GM12878 (cell line): ENCODE measurements at regions of chr3 and their contacts with region 1.

Region 1: GRCh38 chr3:107598926-107599771 is 76.4 kb downstream of the BBX start:
- DNase-seq: peak; percentile 59
- ATAC-seq: peak; percentile 92
- H3K4me3 ChIP-seq: peak overlapping the region; percentile 71
- H3K27ac ChIP-seq: peak overlapping the region; percentile 82
- H3K4me1 ChIP-seq: peaks cover 13% of the 10 kb centered on the region
- H3K27me3 ChIP-seq: no peaks in the 10 kb centered on the region
- CTCF ChIP-seq: no peak
- EP300 ChIP-seq: no peak
- POLR2A ChIP-seq: peak; percentile 58; the same call in 1 of the 2 replicates
- RAD21 ChIP-seq: no peak

Region 2: GRCh38 chr3:107619549-107619948 is 20.4 kb after region 1 on chr3:
- CTCF ChIA-PET with region 1: interaction called, 47 read pairs
- POLR2A ChIA-PET with region 1: interaction called, 11 read pairs
- RAD21 ChIA-PET with region 1: interaction called, 5 read pairs
- SMC1A ChIA-PET with region 1: interaction called, 15 read pairs
- in situ Hi-C with region 1: no loop called
- intact Hi-C with region 1: no loop called
- DNase-seq: no peak
- ATAC-seq: no peak
- H3K4me3 ChIP-seq: peak overlapping the region; percentile 43; the same call in 1 of the 2 replicates
- H3K27ac ChIP-seq: no peak overlapping the region
- H3K4me1 ChIP-seq: peaks cover 15% of the 10 kb centered on the region
- H3K27me3 ChIP-seq: no peaks in the 10 kb centered on the region
- CTCF ChIP-seq: no peak
- EP300 ChIP-seq: no peak
- POLR2A ChIP-seq: no peak
- RAD21 ChIP-seq: no peak

Region 3: DNA sequence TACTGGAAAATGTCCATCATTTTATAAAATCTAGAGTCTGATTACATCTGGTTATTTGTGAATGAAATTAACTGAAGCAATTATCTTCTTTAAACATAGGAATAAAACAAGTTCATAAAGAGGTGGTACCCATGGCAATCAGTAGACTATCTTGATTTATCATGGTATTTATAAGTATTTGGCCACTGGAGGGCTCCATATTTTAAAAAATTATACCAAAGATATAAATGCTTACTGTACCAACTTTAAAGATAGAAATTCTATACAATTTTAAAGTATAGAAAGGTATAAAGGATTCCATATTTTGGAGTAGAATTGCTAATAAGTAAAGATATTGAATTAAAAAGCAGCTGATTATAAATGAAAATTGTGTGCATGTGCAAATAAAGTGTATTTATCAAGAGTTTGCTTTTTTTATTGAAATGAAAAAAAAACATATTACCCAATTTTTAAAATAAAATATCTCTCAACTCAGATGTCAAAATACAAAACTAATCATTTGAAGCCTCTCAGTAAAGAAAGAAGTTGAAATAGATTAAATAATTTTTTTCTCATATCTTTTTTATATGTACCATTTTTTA is 28.9 kb after region 1 on chr3:
- CTCF ChIA-PET with region 1: interaction called, 47 read pairs
- POLR2A ChIA-PET with region 1: interaction called, 6 read pairs
- RAD21 ChIA-PET with region 1: interaction called, 18 read pairs
- SMC1A ChIA-PET with region 1: interaction called, 33 read pairs
- in situ Hi-C with region 1: no loop called
- intact Hi-C with region 1: no loop called
- DNase-seq: no peak
- ATAC-seq: peak; percentile 46; the same call in 1 of the 3 replicates
- H3K4me3 ChIP-seq: no peak overlapping the region
- H3K27ac ChIP-seq: no peak overlapping the region
- H3K4me1 ChIP-seq: peaks cover 10% of the 10 kb centered on the region
- H3K27me3 ChIP-seq: no peaks in the 10 kb centered on the region
- CTCF ChIP-seq: peak in 1 of 3 experiments; percentile 16; a peak in 2 of 6 replicates
- EP300 ChIP-seq: no peak
- POLR2A ChIP-seq: no peak
- RAD21 ChIP-seq: no peak

Region 4: GRCh38 chr3:107633327-107634098 is 34.4 kb after region 1 on chr3:
- CTCF ChIA-PET with region 1: interaction called, 47 read pairs
- POLR2A ChIA-PET with region 1: interaction called, 6 read pairs
- RAD21 ChIA-PET with region 1: interaction called, 18 read pairs
- SMC1A ChIA-PET with region 1: interaction called, 33 read pairs
- in situ Hi-C with region 1: no loop called
- intact Hi-C with region 1: no loop called
- DNase-seq: peak; percentile 56
- ATAC-seq: peak; percentile 94
- H3K4me3 ChIP-seq: peak overlapping the region; percentile 40; the same call in 1 of the 2 replicates
- H3K27ac ChIP-seq: peak overlapping the region; percentile 63
- H3K4me1 ChIP-seq: peaks cover 20% of the 10 kb centered on the region
- H3K27me3 ChIP-seq: no peaks in the 10 kb centered on the region
- CTCF ChIP-seq: no peak
- EP300 ChIP-seq: peak; percentile 63 to 77
- POLR2A ChIP-seq: no peak
- RAD21 ChIP-seq: no peak

Region 5: DNA sequence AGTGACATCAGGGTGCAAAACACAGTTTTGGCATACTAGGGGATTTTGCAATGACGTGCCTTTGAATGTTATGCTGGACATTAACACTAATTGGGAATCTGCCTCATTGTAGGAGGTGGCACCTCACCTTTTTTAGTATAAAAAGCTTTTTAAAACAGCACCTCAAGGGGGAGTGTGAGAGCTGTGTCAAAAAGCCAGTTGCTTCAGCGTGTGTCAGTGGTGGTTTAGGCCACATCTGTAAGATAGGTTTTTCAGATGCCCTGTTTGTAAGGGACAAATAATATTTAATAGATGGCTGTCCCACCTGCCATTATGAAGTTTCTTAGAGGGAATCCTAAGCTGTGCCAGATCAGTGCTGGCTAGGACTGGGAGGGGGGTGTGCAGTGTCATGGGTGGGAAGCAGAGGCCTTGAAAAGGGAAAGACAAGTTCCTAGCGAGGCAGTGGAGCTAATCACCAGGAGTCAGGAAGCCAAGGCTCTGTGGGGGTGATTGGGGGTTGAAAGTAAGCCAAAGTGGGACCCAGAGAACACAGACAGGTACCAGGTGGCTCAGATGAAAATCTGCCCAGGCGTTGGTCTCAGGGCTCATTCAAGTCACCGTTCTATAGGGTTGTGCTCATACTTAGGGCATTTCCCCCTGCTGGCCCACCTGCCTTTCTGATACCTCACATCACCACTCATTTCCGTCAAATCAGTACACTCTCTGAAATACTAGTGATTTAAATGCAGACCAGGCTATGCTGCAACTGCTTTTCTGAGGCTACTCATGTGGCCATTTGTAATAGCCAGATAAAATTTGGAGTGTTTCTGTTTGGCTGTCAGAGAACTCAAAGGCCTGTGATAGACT is 44.1 kb after region 1 on chr3:
- CTCF ChIA-PET with region 1: interaction called, 11 read pairs
- POLR2A ChIA-PET with region 1: interaction called, 3 read pairs
- RAD21 ChIA-PET with region 1: interaction called, 14 read pairs
- SMC1A ChIA-PET with region 1: interaction called, 10 read pairs
- in situ Hi-C with region 1: no loop called
- intact Hi-C with region 1: no loop called
- DNase-seq: no peak
- ATAC-seq: peak; percentile 87
- H3K4me3 ChIP-seq: no peak overlapping the region
- H3K27ac ChIP-seq: no peak overlapping the region
- H3K4me1 ChIP-seq: peaks cover 14% of the 10 kb centered on the region
- H3K27me3 ChIP-seq: no peaks in the 10 kb centered on the region
- CTCF ChIP-seq: peak; percentile 34 to 53 (median 48); a peak in 5 of 6 replicates
- EP300 ChIP-seq: no peak
- POLR2A ChIP-seq: no peak
- RAD21 ChIP-seq: peak; percentile 58